ENCODE measurements at regions of chr7 and their contacts with region 1.

Region 1: DNA sequence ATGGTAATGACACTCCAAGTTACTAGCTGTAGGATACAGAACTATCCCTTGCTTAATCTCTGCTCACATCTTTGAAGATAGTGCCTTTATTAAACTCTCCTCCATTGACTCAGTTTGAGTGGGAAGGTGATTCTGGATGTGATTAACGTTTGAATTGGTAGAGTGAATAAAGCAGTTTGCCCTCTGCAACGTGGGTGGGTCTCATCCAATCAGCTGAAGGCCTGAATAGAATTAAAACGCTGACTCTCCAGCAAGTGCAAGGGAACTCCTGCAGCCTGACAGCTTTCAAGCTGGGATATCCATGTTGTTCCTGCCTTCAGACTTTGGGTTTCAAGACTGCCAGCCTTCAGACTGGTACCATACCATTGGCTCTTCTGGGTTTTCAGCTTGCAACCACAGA is 21.6 kb downstream of the KLF14 start:
- DNase-seq: no peak
- H3K4me3 ChIP-seq: no peak overlapping the region
- H3K27ac ChIP-seq: no peak overlapping the region
- H3K4me1 ChIP-seq: no peaks in the 10 kb centered on the region
- H3K27me3 ChIP-seq: no peaks in the 10 kb centered on the region
- CTCF ChIP-seq: no peak
- POLR2A ChIP-seq: no peak

Region 2: DNA sequence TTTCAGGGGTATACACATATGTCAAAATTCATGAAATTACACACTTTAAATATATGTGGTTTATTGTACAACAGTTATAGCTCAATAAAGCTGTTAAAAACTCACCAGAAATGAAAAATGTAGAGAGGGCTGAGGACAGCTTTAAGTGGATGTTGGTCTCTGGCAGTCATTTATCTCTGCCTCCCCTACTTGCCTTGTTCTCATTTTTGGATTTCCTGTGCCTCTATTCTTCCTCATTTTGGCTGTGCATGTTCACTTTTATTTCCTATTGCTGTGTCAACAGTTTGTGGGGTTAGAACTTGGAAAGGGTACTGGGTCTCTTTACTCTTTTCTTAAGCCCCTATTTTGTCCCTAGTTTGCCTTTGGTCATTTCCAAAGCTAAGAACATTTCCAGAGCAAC is 239.1 kb before region 1 on chr7:
- intact Hi-C with region 1: no loop called
- DNase-seq: no peak
- H3K4me3 ChIP-seq: no peak overlapping the region
- H3K27ac ChIP-seq: no peak overlapping the region
- H3K4me1 ChIP-seq: no peaks in the 10 kb centered on the region
- H3K27me3 ChIP-seq: no peaks in the 10 kb centered on the region
- CTCF ChIP-seq: no peak
- POLR2A ChIP-seq: no peak

Region 3: GRCh38 chr7:130733931-130734814 is 21.8 kb after region 1 on chr7 and contains the start of gene KLF14:
- intact Hi-C with region 1: loop called (anchors 1 kb)
- DNase-seq: no peak
- H3K4me3 ChIP-seq: peak within 1 kb of the TSS; percentile 50 to 66 (median 52)
- H3K27ac ChIP-seq: peak within 1 kb of the TSS in 1 of 2 donors; percentile 45
- H3K4me1 ChIP-seq: no peaks in the 10 kb centered on the region
- H3K27me3 ChIP-seq: peaks cover 3 to 79% of the 10 kb centered on the region in 2 donors
- CTCF ChIP-seq: no peak
- POLR2A ChIP-seq: no peak
- total RNA-seq, gene KLF14: 0.15 to 0.80 TPM in 2 of 3 donors, not detected in the other

Region 4: GRCh38 chr7:132318352-132319318 is 1606.2 kb after region 1 on chr7:
- intact Hi-C with region 1: no loop called
- DNase-seq: peak; percentile 60 to 82
- H3K4me3 ChIP-seq: peak overlapping the region in 1 of 3 donors; percentile 35
- H3K27ac ChIP-seq: no peak overlapping the region
- H3K4me1 ChIP-seq: peaks cover 0 to 7% of the 10 kb centered on the region in 2 donors
- H3K27me3 ChIP-seq: no peaks in the 10 kb centered on the region
- CTCF ChIP-seq: peak; percentile 83 to 89 (median 87)
- POLR2A ChIP-seq: no peak